Panc1 (cell line): ENCODE measurements at regions of chr1 and their contacts with region 1.

Region 1: GRCh38 chr1:179190861-179191260 is 38.6 kb downstream of the ABL2 start:
- DNase-seq: no peak
- ATAC-seq: no peak
- H3K4me3 ChIP-seq: no peak overlapping the region
- H3K27ac ChIP-seq: no peak overlapping the region
- H3K4me1 ChIP-seq: no peaks in the 10 kb centered on the region
- H3K27me3 ChIP-seq: no peaks in the 10 kb centered on the region
- CTCF ChIP-seq: no peak

Region 2: DNA sequence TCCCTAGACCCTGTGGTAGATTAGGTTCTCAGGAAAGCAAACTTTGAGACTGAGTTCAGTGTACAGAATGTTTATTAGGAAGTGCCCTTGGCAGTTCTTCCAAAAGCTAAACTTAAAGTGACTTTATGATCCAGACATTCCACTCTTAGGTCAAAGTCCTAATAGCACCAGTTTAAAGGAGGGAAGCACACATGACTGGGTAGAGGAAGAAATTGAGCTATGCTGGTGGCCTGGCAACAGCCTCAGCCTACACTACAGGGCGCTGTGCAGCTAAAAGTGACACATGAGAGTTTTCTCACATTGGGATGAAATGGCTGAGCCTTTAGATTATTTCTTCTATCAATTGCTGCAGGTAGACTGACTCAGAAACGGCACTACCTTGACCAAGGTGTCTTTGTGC is 1739.7 kb before region 1 on chr1:
- CTCF ChIA-PET with region 1: no interaction called
- POLR2A ChIA-PET with region 1: no interaction called
- in situ Hi-C with region 1: no loop called
- intact Hi-C with region 1: no loop called
- DNase-seq: no peak
- ATAC-seq: no peak
- H3K4me3 ChIP-seq: no peak overlapping the region
- H3K27ac ChIP-seq: no peak overlapping the region
- H3K4me1 ChIP-seq: no peaks in the 10 kb centered on the region
- H3K27me3 ChIP-seq: no peaks in the 10 kb centered on the region
- CTCF ChIP-seq: no peak

Region 3: GRCh38 chr1:179081687-179082332 is 109.1 kb before region 1 on chr1 and contains the start of gene TOR3A:
- CTCF ChIA-PET with region 1: interaction called, 8 read pairs
- POLR2A ChIA-PET with region 1: no interaction called
- in situ Hi-C with region 1: no loop called
- intact Hi-C with region 1: loop called (anchors 10 kb)
- DNase-seq: peak; percentile 54
- ATAC-seq: peak; percentile 95
- H3K4me3 ChIP-seq: peak within 1 kb of the TSS; percentile 74 to 85
- H3K27ac ChIP-seq: peak within 1 kb of the TSS; percentile 91
- H3K4me1 ChIP-seq: peaks cover 5% of the 10 kb centered on the region; the same call in 1 of the 2 replicates
- H3K27me3 ChIP-seq: no peaks in the 10 kb centered on the region
- CTCF ChIP-seq: no peak
- total RNA-seq, gene TOR3A: 51.5 TPM

Region 4: GRCh38 chr1:179121159-179121938 is 69.5 kb before region 1 on chr1:
- CTCF ChIA-PET with region 1: interaction called, 4 read pairs
- POLR2A ChIA-PET with region 1: no interaction called
- in situ Hi-C with region 1: no loop called
- intact Hi-C with region 1: loop called (anchors 2 kb)
- DNase-seq: no peak
- ATAC-seq: peak; percentile 66
- H3K4me3 ChIP-seq: no peak overlapping the region
- H3K27ac ChIP-seq: no peak overlapping the region
- H3K4me1 ChIP-seq: no peaks in the 10 kb centered on the region
- H3K27me3 ChIP-seq: no peaks in the 10 kb centered on the region
- CTCF ChIP-seq: peak; percentile 74; the same call in 1 of the 2 replicates